AG04450 (cell line): ENCODE measurements at regions of chr17 and their contacts with region 1.

Region 1: DNA sequence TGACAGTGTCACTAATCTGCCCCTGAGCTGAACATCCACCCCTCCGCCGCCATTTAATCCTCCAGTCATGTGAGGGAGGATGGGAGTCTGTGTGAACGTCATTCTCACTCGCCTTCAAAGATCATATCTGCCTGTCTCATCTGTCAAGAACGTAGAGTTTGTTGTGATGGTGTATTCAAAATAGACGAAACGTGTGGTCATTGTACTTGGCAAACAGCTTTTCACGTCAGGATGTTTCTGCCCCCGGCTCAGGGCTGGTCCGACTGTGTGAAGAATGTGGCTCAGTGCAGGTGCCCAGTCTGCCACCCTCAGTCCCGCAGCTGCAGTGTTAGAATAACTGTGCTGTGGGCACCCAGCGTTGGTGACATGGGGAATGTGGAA is 148.0 kb downstream of the KCNJ12 start:
- DNase-seq: peak; percentile 45
- H3K4me3 ChIP-seq: no peak overlapping the region
- H3K27ac ChIP-seq: peak overlapping the region; percentile 31
- H3K27me3 ChIP-seq: no peaks in the 10 kb centered on the region
- CTCF ChIP-seq: no peak

Region 2: GRCh38 chr17:21457051-21458026 is 66.9 kb before region 1 on chr17:
- CTCF ChIA-PET with region 1: interaction called, 13 read pairs
- POLR2A ChIA-PET with region 1: no interaction called
- DNase-seq: peak; percentile 59
- H3K4me3 ChIP-seq: no peak overlapping the region
- H3K27ac ChIP-seq: no peak overlapping the region
- H3K27me3 ChIP-seq: peaks cover 32% of the 10 kb centered on the region
- CTCF ChIP-seq: peak; percentile 84

Region 3: DNA sequence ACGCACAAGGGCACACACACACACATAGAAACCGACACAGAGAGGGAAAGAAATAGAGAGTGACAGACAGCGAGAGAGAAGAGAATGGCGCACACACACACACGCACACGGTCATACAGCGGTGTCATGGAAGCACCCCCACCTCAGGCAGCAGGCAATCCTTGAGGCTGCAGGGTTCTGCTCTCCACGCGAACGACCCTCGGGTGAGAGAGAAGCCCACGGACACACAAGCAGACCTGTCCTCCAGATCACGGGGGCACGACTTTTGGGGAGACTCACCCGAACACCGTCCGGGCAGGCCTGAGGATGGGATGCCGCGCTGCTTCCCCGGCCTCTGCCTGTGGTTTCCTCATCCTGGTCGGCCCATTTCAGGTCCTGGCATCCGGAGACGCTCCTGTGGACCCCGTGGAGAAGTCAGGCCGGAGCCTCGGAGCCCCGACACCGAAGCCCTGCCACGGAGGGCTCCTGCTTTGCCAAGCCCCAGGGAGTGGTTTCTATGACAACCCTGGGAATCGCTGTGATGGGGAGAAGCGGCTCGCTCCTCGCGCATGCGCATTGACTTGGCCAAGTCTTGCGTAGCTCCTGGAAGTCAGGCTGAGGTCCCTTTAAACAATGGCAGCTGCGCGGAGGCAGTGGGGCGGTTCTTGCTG is 49.9 kb after region 1 on chr17:
- CTCF ChIA-PET with region 1: no interaction called
- POLR2A ChIA-PET with region 1: no interaction called
- DNase-seq: peak; percentile 46
- H3K4me3 ChIP-seq: peak overlapping the region; percentile 65
- H3K27ac ChIP-seq: no peak overlapping the region
- H3K27me3 ChIP-seq: no peaks in the 10 kb centered on the region
- CTCF ChIP-seq: no peak